ENCODE measurements at regions of chr11 and their contacts with region 1.

Region 1: GRCh38 chr11:104858882-104859775 is 39.1 kb downstream of the CASP12 start:
- DNase-seq: no peak
- ATAC-seq: no peak

Region 2: DNA sequence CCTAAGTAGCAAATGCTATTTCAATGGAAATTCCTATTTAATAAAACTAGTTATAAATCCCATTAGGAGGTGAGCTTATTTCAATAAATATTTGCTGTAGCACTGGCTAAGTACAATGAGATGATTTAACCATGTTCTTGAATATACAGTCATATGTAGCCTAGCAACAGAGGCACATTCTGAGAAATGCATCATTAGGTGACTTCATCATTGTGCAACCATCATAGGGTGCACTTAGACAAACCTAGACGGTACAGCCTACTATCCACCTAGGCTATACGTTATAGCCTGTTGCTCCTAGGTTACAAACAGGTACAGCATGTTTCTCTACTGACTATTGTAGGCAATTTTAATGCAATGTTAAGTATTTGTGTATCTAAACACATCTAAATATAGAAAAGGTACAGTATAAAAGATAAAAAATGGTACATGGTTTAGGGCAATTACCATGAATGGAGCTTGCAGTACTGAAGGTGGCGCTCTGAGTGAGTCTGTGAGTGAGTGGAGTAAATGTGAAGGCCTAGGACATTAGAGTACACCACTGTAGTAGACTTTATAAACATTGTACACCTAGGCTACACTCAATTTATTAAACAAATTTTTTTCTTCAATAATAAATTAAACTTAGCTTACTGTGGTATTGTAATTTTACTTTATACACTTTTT is 311.0 kb before region 1 on chr11:
- intact Hi-C with region 1: no loop called
- DNase-seq: no peak
- ATAC-seq: no peak

Region 3: GRCh38 chr11:104926771-104927611 is 67.9 kb after region 1 on chr11:
- intact Hi-C with region 1: no loop called
- DNase-seq: no peak
- ATAC-seq: no peak

Region 4: GRCh38 chr11:105361651-105362050 is 502.5 kb after region 1 on chr11:
- intact Hi-C with region 1: loop called in 1 of 2 experiments (anchors 5 kb)
- DNase-seq: no peak
- ATAC-seq: no peak